Activated CD4-positive, alpha-beta memory T cell treated with anti-CD3 and anti-CD28 coated beads for 36 hours (primary cell): ENCODE measurements at regions of chr6 and their contacts with region 1.

Region 1: DNA sequence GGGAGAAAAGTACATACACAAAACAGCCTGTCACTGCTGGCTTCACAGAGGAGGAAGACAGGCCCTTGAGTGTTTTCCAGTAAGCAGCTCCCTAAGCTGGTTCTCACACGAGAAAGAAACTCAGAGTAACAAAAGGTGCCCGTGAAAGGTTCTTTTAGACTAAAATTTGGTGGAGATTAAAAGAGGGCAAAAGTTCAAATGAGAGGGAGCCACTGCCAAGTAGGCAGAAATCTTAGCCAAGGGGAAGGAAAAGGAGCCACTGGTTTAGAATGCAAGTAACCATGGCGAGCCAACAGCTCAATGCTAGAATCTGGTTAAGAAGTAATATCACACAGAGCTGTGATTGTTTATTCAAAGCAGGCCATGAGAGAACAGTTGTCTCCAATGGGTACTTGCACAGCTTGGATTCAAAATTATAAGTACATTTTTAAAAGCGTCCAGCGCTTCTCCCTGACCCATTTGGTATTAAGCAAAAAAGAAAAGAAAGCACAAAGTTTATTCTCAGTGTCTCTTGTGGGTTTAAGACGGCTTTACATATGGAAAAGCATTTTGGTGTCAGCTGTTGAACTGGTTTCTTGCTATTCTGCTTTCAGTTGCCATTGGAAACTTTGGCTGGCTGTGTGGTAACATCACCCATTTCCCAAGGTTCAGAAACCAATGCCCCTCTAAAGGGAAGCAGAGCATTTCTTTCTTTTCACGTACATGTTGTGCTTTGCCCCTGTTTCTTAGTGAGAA is 648.5 kb downstream of the RNF144B start:
- DNase-seq: no peak
- H3K4me3 Mint-ChIP-seq: no peak overlapping the region
- H3K27ac Mint-ChIP-seq: no peak overlapping the region
- H3K4me1 Mint-ChIP-seq: no peaks in the 10 kb centered on the region
- H3K27me3 Mint-ChIP-seq: no peaks in the 10 kb centered on the region

Region 2: DNA sequence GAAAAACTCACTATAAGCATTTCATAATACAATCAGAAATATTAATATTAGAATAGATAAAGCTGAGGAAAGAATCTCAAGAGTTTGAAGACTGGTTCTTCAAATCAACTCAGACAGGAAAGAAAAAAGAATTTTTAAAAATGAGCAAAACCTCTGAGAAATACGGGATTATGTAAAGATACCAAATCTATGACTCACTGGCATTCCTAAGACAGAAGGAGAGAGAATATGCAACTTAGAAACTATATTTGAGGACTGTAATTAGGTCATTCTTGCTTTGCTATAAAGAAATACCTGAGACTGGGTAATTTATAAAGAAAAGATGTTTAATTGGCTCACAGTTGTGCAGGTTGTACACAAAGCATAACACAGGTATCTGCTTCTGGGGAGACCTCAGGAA is 16.6 kb after region 1 on chr6:
- CTCF ChIA-PET with region 1: interaction called, 7 read pairs
- POLR2A ChIA-PET with region 1: no interaction called
- intact Hi-C with region 1: loop called (anchors 1 kb)
- DNase-seq: no peak
- H3K4me3 Mint-ChIP-seq: no peak overlapping the region
- H3K27ac Mint-ChIP-seq: no peak overlapping the region
- H3K4me1 Mint-ChIP-seq: no peaks in the 10 kb centered on the region
- H3K27me3 Mint-ChIP-seq: no peaks in the 10 kb centered on the region